ENCODE measurements at regions of chr16 and their contacts with region 1.

Region 1: DNA sequence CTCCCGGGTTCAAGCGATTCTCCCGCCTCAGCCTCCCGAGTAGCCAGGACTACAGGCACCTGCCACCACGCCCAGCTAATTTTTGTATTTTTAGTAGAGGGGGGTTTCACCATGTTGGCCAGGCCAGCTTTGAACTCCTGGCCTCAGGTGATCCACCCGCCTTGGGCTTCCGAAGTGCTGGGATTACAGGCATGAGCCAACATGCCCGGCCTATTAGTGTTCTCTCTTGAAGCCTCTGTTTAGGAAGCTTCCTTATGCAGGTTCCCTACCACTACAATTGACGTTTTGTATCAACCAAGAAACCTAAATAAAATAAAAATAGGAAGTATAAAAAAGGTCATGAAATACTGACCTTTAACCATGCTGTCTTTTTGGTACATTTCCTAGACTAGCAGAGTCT is 16.0 kb downstream of the CHST5 start:
- DNase-seq: no peak
- ATAC-seq: no peak
- H3K4me3 ChIP-seq: no peak overlapping the region
- H3K27ac ChIP-seq: no peak overlapping the region
- H3K4me1 ChIP-seq: peaks cover 9 to 14% of the 10 kb centered on the region in 2 experiments
- H3K27me3 ChIP-seq: no peaks in the 10 kb centered on the region
- CTCF ChIP-seq: no peak
- POLR2A ChIP-seq: no peak
- RAD21 ChIP-seq: no peak

Region 2: DNA sequence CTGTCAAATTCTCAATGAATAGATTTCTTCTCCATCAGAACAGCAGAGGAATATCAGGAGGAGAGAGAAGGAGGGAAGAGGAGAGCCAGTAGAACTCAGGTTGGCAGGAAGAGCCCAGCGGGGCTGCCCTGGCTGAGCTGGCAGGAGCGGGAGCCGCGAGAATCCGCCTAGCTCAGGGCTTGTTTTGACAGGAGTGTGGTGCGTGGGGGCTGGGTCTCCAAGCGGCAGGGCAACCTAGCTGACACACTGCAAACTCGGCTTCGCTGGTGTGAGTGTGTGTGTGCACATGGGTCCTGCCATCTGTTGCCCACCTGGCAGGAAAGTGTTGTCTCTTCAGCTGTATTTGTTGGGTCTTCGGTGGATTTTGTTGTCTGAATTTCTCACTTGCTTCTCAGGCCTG is 240.6 kb before region 1 on chr16:
- CTCF ChIA-PET with region 1: no interaction called
- POLR2A ChIA-PET with region 1: no interaction called
- RAD21 ChIA-PET with region 1: no interaction called
- intact Hi-C with region 1: no loop called
- DNase-seq: no peak
- ATAC-seq: no peak
- H3K4me3 ChIP-seq: no peak overlapping the region
- H3K27ac ChIP-seq: no peak overlapping the region
- H3K4me1 ChIP-seq: peaks cover 3 to 4% of the 10 kb centered on the region in 2 experiments; a peak in 2 of 4 replicates
- H3K27me3 ChIP-seq: no peaks in the 10 kb centered on the region
- CTCF ChIP-seq: no peak
- POLR2A ChIP-seq: no peak
- RAD21 ChIP-seq: no peak

Region 3: GRCh38 chr16:75471723-75472633 is 47.9 kb before region 1 on chr16:
- CTCF ChIA-PET with region 1: interaction called, 12 read pairs
- POLR2A ChIA-PET with region 1: no interaction called
- RAD21 ChIA-PET with region 1: interaction called, 3 to 6 read pairs
- intact Hi-C with region 1: loop called (anchors 1 kb)
- DNase-seq: no peak
- ATAC-seq: peak; percentile 97
- H3K4me3 ChIP-seq: no peak overlapping the region
- H3K27ac ChIP-seq: no peak overlapping the region
- H3K4me1 ChIP-seq: peaks cover 3 to 10% of the 10 kb centered on the region in 2 experiments; a peak in 2 of 4 replicates
- H3K27me3 ChIP-seq: no peaks in the 10 kb centered on the region
- CTCF ChIP-seq: peak; percentile 70 to 94 (median 77)
- POLR2A ChIP-seq: no peak
- RAD21 ChIP-seq: peak; percentile 97

Region 4: GRCh38 chr16:75495076-75495674 is 24.7 kb before region 1 on chr16 and contains the start of gene CHST6:
- CTCF ChIA-PET with region 1: interaction called, 11 read pairs
- POLR2A ChIA-PET with region 1: interaction called, 4 read pairs
- RAD21 ChIA-PET with region 1: interaction called, 3 to 5 read pairs
- intact Hi-C with region 1: no loop called
- DNase-seq: no peak
- ATAC-seq: peak; percentile 93
- H3K4me3 ChIP-seq: peak within 1 kb of the TSS; percentile 50 to 70
- H3K27ac ChIP-seq: peak within 1 kb of the TSS; percentile 30; the same call in 1 of the 2 replicates
- H3K4me1 ChIP-seq: peaks cover 25 to 41% of the 10 kb centered on the region in 2 experiments
- H3K27me3 ChIP-seq: no peaks in the 10 kb centered on the region
- CTCF ChIP-seq: no peak
- POLR2A ChIP-seq: peak; percentile 67
- RAD21 ChIP-seq: no peak
- total RNA-seq, gene CHST6: 17.9 TPM

Region 5: DNA sequence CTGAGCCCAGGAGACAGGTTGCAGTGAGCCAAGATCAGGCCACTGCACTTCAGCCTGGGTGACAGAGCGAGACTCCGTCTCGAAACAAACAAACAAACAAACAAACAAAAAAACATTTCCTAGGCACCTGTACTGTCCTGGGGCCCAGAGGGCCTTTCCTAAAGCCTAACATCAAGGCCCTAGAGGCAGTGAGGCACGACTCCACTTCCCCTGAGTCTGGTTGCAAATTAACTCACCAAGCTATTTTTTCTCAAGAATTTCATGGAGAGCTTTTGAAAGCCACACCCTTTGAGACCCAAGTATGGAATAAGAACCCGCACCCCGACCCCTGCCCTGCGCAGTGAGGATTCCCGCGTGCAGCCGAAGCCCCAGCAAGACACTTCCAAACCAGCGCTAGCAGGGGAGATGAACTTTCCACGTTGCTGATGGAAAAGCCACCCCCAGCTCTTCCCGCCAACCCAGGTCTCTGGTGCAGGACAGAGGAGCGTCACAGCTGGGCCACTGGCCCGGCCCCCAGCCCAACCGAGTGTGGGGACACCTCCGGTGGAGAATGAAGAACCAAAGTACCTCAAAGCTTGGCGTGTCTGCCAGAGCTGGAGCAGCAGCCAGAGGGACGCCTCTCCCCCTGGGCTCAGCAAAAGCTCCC is 14.8 kb after region 1 on chr16:
- CTCF ChIA-PET with region 1: interaction called, 14 read pairs
- POLR2A ChIA-PET with region 1: interaction called, 3 read pairs
- RAD21 ChIA-PET with region 1: interaction called in 1 of 2 experiments, 3 read pairs
- intact Hi-C with region 1: no loop called
- DNase-seq: no peak
- ATAC-seq: no peak
- H3K4me3 ChIP-seq: no peak overlapping the region
- H3K27ac ChIP-seq: no peak overlapping the region
- H3K4me1 ChIP-seq: no peaks in the 10 kb centered on the region
- H3K27me3 ChIP-seq: no peaks in the 10 kb centered on the region
- CTCF ChIP-seq: no peak
- POLR2A ChIP-seq: no peak
- RAD21 ChIP-seq: no peak

Region 6: DNA sequence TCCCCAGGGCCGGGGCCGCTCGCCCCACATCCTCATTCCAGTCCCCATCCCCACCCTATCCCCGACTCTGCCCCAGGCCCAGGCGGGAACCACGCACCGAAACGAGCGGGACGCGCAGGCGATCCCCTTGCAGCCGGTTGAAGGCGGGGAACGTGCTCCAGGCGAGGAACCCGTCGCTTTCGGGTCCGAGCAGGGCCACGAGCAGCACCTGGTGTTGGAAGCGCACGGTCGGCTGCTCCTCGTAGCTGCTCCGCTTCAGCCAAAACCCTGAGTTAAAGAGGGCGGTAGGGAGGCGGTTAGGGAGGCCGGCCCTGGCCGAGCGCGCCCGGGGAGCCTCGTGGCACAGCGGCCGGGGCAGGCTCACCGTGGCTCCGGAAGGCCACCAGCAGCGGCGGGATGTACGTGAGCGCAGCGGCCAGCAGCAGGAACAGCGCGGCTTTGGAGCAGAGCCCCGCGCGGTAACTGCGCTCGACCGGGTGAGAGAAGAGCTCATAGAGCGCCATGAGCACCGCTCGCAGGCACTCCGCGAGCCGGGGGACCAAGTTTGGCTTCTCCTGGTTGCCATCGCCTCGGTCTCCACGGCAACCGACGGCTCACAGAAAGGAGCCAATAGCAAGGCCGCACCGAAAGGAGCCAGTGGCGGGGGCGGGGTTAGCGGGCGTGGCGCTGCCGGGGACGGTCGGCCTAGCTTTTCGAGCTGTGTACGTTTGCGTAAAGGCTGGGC is 36.0 kb after region 1 on chr16 and contains the start of gene TMEM231:
- CTCF ChIA-PET with region 1: interaction called, 12 read pairs
- POLR2A ChIA-PET with region 1: interaction called, 5 read pairs
- RAD21 ChIA-PET with region 1: interaction called in 1 of 2 experiments, 3 read pairs
- intact Hi-C with region 1: loop called (anchors 2 kb)
- DNase-seq: peak; percentile 84
- ATAC-seq: peak; percentile 87
- H3K4me3 ChIP-seq: peak within 1 kb of the TSS; percentile 80 to 86
- H3K27ac ChIP-seq: peak within 1 kb of the TSS; percentile 73
- H3K4me1 ChIP-seq: peaks cover 10 to 21% of the 10 kb centered on the region in 2 experiments; a peak in 3 of 4 replicates
- H3K27me3 ChIP-seq: no peaks in the 10 kb centered on the region
- CTCF ChIP-seq: no peak
- POLR2A ChIP-seq: no peak
- RAD21 ChIP-seq: no peak
- total RNA-seq, gene TMEM231: 9.7 TPM

Region 7: DNA sequence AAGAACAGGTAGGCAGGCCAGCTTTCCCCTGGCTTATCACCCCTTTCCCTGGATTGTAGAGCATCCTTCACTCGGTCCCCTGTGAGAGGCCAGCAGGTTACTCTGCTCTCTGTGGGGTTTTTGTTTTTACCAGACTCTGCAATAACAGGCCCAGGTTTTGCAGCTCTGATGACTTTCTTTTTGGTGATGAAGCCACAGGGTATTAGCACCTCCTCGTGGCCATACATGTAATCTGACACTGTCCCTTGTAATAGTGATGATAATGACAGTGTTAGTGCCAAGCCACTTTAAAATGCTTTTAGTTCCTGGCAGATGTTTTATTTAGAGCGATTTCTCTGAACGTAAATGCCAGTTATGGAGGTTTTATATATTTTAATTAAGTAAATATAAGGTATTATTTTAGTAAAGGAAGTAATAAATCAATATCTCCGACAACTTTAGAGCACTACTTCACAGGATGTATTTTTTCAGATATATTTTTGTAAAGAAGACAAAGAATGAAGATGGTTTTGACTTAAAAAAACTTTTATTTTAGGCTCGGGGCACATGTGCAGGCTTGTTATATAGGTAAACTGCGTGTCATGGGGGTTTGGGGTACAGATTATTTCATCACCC is 244.4 kb after region 1 on chr16:
- CTCF ChIA-PET with region 1: interaction called, 7 read pairs
- POLR2A ChIA-PET with region 1: no interaction called
- RAD21 ChIA-PET with region 1: no interaction called
- intact Hi-C with region 1: loop called (anchors 1 kb)
- DNase-seq: peak; percentile 60
- ATAC-seq: peak; percentile 98
- H3K4me3 ChIP-seq: no peak overlapping the region
- H3K27ac ChIP-seq: no peak overlapping the region
- H3K4me1 ChIP-seq: no peaks in the 10 kb centered on the region
- H3K27me3 ChIP-seq: peaks cover 24% of the 10 kb centered on the region
- CTCF ChIP-seq: peak; percentile 82 to 84 (median 84); a peak in 5 of 6 replicates
- POLR2A ChIP-seq: no peak
- RAD21 ChIP-seq: peak; percentile 92